ENCODE measurements at regions of chr19 and their contacts with region 1.

Region 1: GRCh38 chr19:17859533-17860330 is at the start of gene RPL18A:
- DNase-seq: peak; percentile 98
- CTCF ChIP-seq: peak; percentile 83

Region 2: GRCh38 chr19:17511724-17512573 is 347.8 kb before region 1 on chr19:
- CTCF ChIA-PET with region 1: no interaction called
- POLR2A ChIA-PET with region 1: interaction called, 12 read pairs
- DNase-seq: peak; percentile 90
- CTCF ChIP-seq: peak; percentile 61

Region 3: GRCh38 chr19:17755977-17756670 is 103.6 kb before region 1 on chr19:
- CTCF ChIA-PET with region 1: interaction called, 11 read pairs
- POLR2A ChIA-PET with region 1: interaction called, 14 read pairs
- DNase-seq: peak; percentile 84
- CTCF ChIP-seq: no peak

Region 4: GRCh38 chr19:17805427-17805826 is 54.3 kb before region 1 on chr19:
- CTCF ChIA-PET with region 1: interaction called, 4 read pairs
- POLR2A ChIA-PET with region 1: interaction called, 10 read pairs
- DNase-seq: no peak
- CTCF ChIP-seq: no peak

Region 5: GRCh38 chr19:17871878-17872250 is 12.1 kb after region 1 on chr19 and contains the start of gene SLC5A5:
- CTCF ChIA-PET with region 1: interaction called, 18 read pairs
- POLR2A ChIA-PET with region 1: interaction called, 4 read pairs
- DNase-seq: no peak
- CTCF ChIP-seq: no peak

Region 6: DNA sequence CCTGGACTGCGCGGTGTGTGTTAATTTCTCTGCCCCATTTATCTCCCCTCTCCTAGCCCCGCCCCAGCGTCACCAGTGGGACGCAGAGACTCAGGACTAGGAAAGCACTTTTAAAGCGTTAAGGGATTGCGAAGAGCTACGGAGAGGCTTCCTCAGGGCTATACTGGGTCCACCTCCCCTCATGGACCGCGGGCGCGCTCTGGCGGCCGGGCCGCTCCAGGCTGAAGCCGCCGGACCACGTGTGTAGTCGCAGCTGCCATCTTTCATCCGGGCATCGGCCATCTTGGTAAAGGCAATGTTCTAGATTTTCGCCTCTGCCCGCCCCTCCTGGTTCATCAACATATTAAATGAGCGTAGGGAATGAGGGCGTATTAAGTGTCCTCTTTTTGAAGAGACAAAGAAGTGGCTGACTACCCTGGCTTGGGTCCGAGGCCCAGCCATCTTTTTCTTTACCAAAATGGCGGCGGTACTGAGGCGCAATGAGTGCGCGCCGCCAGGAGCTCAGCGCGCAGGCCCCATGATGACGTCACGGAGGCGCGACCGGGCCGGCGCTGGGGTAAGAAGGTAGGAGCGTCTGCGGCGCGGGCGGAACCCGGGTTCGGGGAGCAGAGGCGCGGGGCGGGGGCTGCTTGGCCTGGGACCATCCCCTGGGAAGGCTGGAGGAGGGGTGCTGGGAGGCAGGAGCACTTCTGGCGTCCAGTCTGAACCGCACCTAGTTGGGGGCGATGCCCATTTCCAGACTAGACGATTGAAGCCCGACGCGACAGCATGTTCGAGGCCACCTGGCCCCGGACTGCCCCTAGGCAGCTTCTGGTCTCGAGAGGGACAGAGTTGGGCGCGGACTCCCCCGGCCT is 73.0 kb after region 1 on chr19 and contains the start of gene CCDC124:
- CTCF ChIA-PET with region 1: interaction called, 124 read pairs
- POLR2A ChIA-PET with region 1: interaction called, 40 read pairs
- DNase-seq: peak; percentile 93
- CTCF ChIP-seq: peak; percentile 99